ENCODE measurements at regions of chr2 and their contacts with region 1.

Region 1: GRCh38 chr2:189412330-189412953 is 28.8 kb upstream of the WDR75 start:
- DNase-seq: no peak
- ATAC-seq: peak; percentile 85

Region 2: GRCh38 chr2:188524519-188525113 is 887.8 kb before region 1 on chr2:
- intact Hi-C with region 1: loop called (anchors 10 kb)
- DNase-seq: peak; percentile 36
- ATAC-seq: peak; percentile 49

Region 3: DNA sequence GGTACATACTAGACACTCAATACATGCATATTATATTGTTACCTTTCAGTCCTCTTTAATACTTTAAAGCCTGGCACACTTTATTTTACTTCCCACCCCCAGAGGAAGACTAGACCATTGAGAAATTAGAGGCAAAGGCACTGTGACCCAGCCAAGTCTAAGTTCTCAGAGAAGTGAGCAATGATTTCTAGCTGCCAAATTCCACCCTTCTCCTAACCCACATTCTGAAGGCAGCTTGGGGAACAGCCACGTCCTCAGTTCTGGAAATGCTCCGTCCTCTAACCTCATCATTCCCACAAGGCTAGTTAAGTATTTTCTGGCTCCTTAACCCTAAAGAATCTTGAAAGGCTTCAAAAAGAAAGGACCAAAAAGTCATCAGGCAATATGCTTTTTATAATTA is 319.5 kb before region 1 on chr2:
- intact Hi-C with region 1: loop called (anchors 5 kb)
- DNase-seq: peak; percentile 57
- ATAC-seq: peak; percentile 94

Region 4: GRCh38 chr2:189181672-189182071 is 230.8 kb before region 1 on chr2:
- intact Hi-C with region 1: no loop called
- DNase-seq: no peak
- ATAC-seq: no peak

Region 5: DNA sequence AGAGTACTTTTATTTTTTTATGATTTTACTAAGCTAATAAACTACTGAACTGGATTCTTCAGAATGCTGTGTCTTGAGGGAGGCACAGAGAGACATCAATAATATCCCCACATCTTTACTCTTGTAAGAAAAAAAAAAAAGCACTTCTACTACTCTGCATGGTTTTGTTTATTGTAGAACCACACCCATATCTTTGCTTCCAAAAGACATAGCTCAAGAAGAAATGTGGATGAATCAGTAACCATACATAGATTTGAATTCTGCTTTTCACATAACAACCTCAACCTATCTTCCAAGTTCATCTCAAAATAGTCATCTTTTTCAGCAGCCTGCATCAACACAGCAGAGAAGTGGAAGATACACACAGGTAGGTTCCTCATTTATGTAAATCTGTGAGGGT is 220.7 kb before region 1 on chr2:
- intact Hi-C with region 1: no loop called
- DNase-seq: no peak
- ATAC-seq: no peak

Region 6: DNA sequence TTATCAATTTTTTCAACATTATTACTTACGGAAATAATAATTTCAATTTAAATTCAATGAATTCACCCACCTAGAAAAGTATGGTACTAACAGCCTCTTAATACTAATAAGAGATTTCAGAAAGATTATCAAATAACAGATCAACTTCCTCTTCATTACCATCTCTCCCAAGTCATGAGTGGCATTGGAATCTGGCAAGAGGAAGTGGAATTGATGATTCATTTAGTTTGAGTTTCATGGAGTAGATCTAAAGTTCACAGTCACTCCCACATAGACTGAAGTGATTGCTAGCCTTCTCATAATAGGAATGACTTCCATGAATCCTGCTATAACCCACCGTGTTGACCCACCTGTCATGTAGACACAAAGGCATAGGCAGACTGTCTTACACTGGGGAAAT is 48.9 kb before region 1 on chr2:
- intact Hi-C with region 1: no loop called
- DNase-seq: no peak
- ATAC-seq: no peak

Region 7: DNA sequence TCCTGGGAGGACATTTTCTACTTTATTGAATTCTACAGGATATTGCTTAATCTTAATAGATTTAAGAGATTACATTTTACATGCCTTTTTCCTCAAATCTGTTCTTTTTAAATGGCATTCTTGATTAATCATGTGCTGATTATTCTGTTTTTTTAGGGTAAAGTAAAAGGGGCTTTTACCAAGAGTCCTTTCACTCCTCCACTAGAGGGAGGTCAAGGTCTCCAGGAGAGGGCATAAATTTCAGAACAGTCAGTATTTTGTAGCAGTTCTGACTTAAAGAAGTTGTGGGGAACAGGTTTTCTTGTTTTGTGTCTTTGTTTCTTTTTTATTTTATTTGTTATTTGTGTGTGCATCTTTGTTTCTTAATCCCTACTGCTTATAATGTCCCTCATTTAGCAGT is 54.2 kb after region 1 on chr2:
- intact Hi-C with region 1: no loop called
- DNase-seq: no peak
- ATAC-seq: peak; percentile 77

Measured in Right ventricle myocardium superior (tissue), 1 donor.